Ascending aorta (tissue), 2 donors: ENCODE measurements at regions of chr1 and their contacts with region 1.

Region 1: GRCh38 chr1:19661721-19662228 is 2.9 kb upstream of the HTR6 start:
- DNase-seq: no peak
- H3K4me3 ChIP-seq: no peak overlapping the region
- H3K27ac ChIP-seq: no peak overlapping the region
- H3K4me1 ChIP-seq: peaks cover 5 to 7% of the 10 kb centered on the region in 2 donors
- H3K27me3 ChIP-seq: peaks cover 10% of the 10 kb centered on the region
- CTCF ChIP-seq: peak; percentile 54 to 78 (median 56)

Region 2: DNA sequence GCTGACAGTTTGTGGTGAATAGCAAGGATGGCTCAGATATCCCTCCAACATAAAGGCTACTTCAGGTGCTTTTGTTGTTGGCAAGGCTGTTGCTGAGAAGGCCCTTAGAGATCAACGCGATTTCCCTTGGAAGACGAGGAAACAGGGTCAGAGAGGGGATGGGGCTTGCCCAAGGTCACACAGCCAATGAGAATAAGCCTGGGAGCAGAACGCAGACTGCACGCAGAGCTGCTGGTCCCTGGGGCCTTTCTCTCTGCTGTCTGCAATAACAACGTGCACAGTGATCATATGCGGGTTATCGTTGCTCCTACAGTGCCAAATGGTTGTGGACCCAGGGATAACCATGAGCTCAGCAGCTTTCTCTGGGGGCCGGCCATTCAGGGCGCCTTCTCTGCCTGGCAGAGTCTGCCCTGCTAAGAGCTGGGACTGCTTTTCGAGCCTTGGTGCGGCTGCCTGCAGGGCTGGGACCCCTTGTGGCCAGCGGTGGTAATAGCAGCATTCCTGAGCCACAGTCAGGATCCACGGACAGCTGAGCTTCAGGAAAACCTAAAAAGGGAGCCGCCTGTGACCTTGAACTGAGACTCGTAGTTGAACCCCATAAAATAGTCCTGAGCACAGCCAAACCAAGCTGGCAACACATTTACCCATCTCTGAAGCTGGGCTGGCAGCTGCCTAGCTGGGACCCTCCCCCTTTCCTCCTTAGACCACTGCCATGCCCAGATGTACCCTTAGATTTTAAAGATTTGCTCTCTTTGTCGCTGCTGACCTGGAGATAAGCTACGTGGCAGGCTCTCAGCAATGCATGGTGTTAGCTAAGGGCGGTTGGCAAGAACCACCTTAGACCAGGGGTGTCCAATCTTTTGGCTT is 42.7 kb after region 1 on chr1:
- intact Hi-C with region 1: loop called (anchors 2 kb)
- DNase-seq: peak in 1 of 2 donors; percentile 73
- H3K4me3 ChIP-seq: no peak overlapping the region
- H3K27ac ChIP-seq: no peak overlapping the region
- H3K4me1 ChIP-seq: peaks cover 0 to 3% of the 10 kb centered on the region in 2 donors
- H3K27me3 ChIP-seq: no peaks in the 10 kb centered on the region
- CTCF ChIP-seq: peak; percentile 81 to 88 (median 84)